Psoas muscle (tissue), 8 donors: ENCODE measurements at regions of chr3 and their contacts with region 1.

Region 1: DNA sequence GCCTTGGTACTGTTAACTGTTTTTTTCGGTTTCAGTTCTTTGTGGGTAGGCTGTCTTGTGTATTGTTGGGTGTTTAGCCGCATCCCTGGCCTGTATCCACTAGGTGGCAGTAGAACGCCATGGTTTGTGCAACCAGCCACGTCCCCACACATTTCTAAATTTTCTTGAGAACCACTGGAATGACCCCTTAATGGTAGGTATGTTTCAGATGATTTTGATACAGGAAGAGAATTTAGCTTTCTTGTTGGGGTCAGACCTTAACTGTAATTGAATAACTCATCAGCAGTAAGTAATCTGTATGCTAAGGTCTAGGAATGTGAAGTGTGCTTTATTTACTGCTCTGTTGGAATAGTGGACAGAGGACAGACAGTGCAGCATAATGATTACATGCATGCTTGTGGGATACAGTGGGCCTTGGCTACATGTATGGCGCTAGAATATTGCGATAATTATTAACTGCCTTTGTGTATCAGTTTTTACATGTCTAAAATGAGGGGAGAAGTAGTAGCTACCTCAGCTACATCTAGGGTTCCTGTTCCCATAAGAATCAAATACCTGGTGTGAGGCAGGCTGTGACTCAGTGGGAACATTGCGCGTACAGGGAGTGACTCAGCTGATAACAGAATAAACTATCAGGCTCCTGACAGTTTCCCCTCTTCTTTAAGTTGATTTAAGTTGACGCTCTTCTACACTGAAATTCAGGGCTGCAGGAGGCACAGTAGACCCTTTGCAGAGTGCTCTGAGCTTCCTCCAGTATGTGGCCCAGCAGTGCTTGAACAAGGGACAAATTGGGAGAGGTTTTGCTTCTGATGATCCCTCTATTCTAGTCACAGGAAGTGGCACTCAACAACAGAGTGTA is 25.0 kb upstream of the GPR171 start:
- DNase-seq: peak; percentile 59 to 76
- ATAC-seq: peak; percentile 68 to 82 (median 70)
- H3K4me3 ChIP-seq: no peak overlapping the region
- H3K27ac ChIP-seq: peak overlapping the region; percentile 68
- H3K4me1 ChIP-seq: peaks cover 23% of the 10 kb centered on the region
- H3K27me3 ChIP-seq: no peaks in the 10 kb centered on the region
- CTCF ChIP-seq: peak; percentile 89

Region 2: DNA sequence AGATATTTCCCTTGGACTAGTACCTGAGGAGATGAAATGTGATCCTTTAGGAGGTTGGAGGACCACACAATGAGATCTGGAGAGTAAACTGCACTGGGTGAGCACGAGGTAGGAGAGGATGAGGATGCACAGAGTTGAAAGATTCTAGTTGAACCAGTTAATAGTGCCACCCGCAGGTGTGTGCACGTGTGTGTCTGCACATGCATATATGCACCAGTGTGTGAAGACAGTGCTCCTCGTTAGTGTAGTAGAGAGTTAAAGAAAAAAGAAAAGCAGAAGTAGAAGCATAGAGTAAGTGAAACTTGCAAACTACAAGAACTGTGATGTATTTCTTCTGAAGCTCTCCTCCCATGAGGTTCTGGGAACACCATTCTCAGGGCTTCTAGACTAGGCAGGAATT is 134.1 kb before region 1 on chr3:
- intact Hi-C with region 1: no loop called
- DNase-seq: no peak
- ATAC-seq: no peak
- H3K4me3 ChIP-seq: no peak overlapping the region
- H3K27ac ChIP-seq: no peak overlapping the region
- H3K4me1 ChIP-seq: no peaks in the 10 kb centered on the region
- H3K27me3 ChIP-seq: peaks cover 0 to 7% (median 1%) of the 10 kb centered on the region in 3 donors
- CTCF ChIP-seq: no peak

Region 3: GRCh38 chr3:151168269-151169094 is 59.6 kb before region 1 on chr3:
- intact Hi-C with region 1: loop called (anchors 2 to 5 kb)
- DNase-seq: peak; percentile 79 to 91
- ATAC-seq: peak; percentile 85 to 89 (median 87)
- H3K4me3 ChIP-seq: no peak overlapping the region
- H3K27ac ChIP-seq: peak overlapping the region; percentile 84
- H3K4me1 ChIP-seq: peaks cover 22% of the 10 kb centered on the region
- H3K27me3 ChIP-seq: no peaks in the 10 kb centered on the region
- CTCF ChIP-seq: peak; percentile 87

Region 4: DNA sequence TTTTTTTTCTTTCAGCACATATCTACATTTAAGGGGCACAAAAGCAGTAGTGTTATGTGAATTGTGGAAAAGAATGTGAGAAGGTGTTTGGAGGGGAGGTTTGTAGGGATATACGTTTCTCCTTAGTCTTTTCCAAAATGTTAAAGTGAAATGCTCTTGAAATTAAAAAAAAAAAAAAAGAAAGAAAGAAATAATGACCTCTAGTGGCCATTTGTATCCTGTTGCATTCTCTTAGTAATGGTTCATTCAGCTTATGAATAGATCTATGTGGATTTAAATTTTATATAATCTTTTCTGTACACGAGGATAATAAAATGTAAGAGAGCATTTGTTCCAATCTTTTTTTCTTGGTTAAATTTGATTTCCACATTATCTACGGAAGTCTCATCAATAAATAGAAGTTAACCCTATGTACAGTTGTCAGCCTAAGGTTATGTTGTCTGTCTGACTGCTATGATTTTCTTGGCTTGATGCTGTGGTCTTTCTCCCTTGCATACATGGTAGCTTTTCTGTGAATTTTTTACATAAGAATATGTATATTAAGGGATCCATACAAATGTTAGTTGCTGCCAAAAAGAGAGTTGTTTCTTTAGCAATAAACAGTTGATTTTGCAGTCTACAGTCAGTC is 99.6 kb after region 1 on chr3:
- intact Hi-C with region 1: loop called in 1 of 2 experiments (anchors 5 kb)
- DNase-seq: no peak
- ATAC-seq: peak in 1 of 4 donors; percentile 62
- H3K4me3 ChIP-seq: no peak overlapping the region
- H3K27ac ChIP-seq: no peak overlapping the region
- H3K4me1 ChIP-seq: no peaks in the 10 kb centered on the region
- H3K27me3 ChIP-seq: no peaks in the 10 kb centered on the region
- CTCF ChIP-seq: peak; percentile 52